ENCODE measurements at regions of chr9 and their contacts with region 1.

Region 1: GRCh38 chr9:27870404-27870803 is 297.1 kb upstream of the C9orf72 start:
- DNase-seq: no peak
- H3K4me3 ChIP-seq: no peak overlapping the region
- H3K27ac ChIP-seq: no peak overlapping the region
- H3K4me1 ChIP-seq: no peaks in the 10 kb centered on the region
- H3K27me3 ChIP-seq: no peaks in the 10 kb centered on the region
- CTCF ChIP-seq: no peak
- POLR2A ChIP-seq: no peak

Region 2: DNA sequence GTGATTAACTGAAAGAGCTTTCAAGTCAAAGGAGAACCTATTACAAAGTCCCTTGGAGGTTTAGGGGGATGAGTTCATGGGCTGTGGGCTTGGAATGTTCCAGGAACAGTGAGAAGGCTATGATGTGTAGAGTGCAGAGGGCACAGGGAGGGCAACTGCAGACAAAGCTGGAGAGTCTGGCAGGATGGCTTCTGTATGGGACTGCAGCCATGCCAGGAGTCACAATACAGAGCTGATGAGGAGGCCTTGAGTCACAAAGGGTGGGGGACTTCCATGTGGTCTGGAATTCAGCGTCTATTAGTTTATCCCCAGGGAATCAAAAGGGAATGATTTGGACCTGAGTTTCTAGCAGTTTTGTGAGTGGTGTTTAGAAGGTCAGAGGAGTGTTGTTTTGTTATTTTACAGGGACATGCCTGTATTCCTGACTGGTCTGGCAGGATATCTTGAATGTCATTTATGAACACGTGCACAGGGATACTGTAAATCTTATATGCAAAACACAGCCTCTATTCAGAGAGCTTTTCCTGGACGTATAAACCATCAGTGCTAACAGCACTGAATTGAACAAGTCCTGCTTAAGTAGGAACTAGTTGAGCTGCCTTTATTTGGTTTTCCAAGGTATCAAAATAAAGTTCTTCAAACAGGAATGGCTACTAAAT is 775.6 kb before region 1 on chr9:
- intact Hi-C with region 1: loop called (anchors 10 kb)
- DNase-seq: no peak
- H3K4me3 ChIP-seq: no peak overlapping the region
- H3K27ac ChIP-seq: no peak overlapping the region
- H3K4me1 ChIP-seq: no peaks in the 10 kb centered on the region
- H3K27me3 ChIP-seq: no peaks in the 10 kb centered on the region
- CTCF ChIP-seq: no peak
- POLR2A ChIP-seq: no peak